Endothelial cell of umbilical vein (primary cell): ENCODE measurements at regions of chr13 and their contacts with region 1.

Region 1: DNA sequence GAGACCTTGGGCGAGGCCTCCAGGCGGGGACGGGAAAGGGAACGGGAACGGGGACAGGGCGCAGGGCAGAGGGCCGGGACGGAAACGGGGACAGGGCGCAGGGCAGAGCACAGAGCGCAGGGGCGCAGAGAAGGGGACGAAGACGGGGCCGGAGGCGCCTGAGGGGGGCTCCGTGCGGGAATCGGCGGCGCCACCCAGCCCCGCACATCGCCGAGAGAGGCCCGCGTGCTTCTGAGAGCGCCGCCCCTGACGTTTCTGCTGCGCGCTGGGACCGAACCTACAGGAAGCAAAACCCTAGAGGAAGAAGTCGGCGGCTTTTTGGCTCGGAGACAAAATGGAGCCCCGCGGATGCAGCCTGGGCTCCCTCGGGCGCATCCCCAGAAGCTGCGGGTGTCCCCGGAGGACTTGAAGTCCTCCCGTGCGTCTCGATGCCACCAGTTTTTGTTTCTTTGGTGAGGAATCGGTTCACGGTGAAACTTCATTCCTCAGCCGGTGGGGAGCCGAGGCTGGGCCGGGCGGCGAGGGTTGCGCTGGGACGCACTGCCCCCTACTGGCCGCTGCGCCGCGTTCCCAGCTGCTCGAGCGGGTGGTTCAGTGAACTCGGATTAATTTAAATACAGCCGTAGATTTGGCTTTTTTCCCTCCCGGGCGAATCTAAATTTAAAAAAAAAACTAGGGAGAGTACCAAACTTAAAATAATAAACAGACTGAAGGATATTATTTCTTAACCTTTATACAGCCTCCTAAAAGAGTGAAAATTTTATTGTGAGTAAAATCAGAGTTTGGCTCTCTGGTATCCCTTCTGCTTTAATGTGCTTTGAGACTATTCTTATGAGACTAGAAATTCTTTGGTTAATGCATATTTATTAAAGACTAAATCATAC is 350.0 kb upstream of the ARGLU1 start:
- DNase-seq: peak; percentile 91
- H3K4me3 ChIP-seq: peak overlapping the region; percentile 44 to 74 (median 51)
- H3K27ac ChIP-seq: peak overlapping the region; percentile 90
- H3K4me1 ChIP-seq: peaks cover 27% of the 10 kb centered on the region
- H3K27me3 ChIP-seq: peaks cover 7 to 13% of the 10 kb centered on the region in 2 experiments
- CTCF ChIP-seq: peak; percentile 92 to 97
- POLR2A ChIP-seq: peak; percentile 55

Region 2: GRCh38 chr13:105442941-105443340 is 1475.0 kb before region 1 on chr13:
- CTCF ChIA-PET with region 1: no interaction called
- POLR2A ChIA-PET with region 1: no interaction called
- dilution Hi-C with region 1: no loop called
- intact Hi-C with region 1: loop called (anchors 1 kb)
- DNase-seq: peak; percentile 93
- H3K4me3 ChIP-seq: no peak overlapping the region
- H3K27ac ChIP-seq: peak overlapping the region; percentile 65
- H3K4me1 ChIP-seq: peaks cover 24% of the 10 kb centered on the region
- H3K27me3 ChIP-seq: no peaks in the 10 kb centered on the region
- CTCF ChIP-seq: no peak
- POLR2A ChIP-seq: no peak

Region 3: DNA sequence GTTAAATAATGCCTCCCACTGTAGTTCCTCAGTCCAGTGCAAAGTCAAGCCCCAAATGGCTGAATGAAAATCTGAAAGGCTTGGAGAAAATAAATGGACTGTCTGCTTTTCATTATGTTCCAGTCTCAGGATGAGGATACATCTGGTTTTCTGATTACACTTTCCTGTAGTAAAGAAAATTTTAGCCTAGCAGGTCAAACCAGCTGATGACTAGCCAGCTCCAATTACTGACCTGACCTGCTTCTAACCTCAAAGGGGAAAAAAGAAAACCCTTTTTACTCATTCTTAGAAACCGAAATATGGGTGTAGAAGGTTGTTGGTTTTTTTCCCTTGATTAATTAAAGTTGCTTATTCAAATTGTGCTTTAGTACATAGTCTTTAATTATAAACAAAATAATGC is 800.9 kb before region 1 on chr13:
- CTCF ChIA-PET with region 1: no interaction called
- POLR2A ChIA-PET with region 1: no interaction called
- dilution Hi-C with region 1: no loop called
- intact Hi-C with region 1: loop called (anchors 5 kb)
- DNase-seq: peak; percentile 93
- H3K4me3 ChIP-seq: no peak overlapping the region
- H3K27ac ChIP-seq: peak overlapping the region; percentile 74
- H3K4me1 ChIP-seq: peaks cover 52% of the 10 kb centered on the region
- H3K27me3 ChIP-seq: no peaks in the 10 kb centered on the region
- CTCF ChIP-seq: no peak
- POLR2A ChIP-seq: no peak

Region 4: DNA sequence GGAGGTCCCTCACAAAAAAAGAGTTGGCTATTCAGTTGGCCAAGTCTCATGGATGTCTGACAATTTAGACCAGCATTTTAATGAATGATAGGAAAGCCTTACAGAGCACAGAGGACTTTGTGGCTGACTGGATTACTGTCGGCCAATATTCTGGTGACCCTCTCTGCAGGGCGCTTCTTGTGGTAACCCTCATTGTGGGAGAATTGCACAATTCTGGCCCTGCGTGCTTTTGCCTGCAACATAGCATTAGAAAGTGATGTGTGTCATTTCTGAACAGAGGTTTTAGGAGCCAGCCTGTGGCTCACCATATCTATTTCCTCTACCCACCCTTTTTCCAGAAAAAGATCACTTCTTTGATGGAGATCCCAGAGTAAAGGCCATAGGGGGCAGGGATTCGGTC is 453.8 kb before region 1 on chr13:
- CTCF ChIA-PET with region 1: no interaction called
- POLR2A ChIA-PET with region 1: no interaction called
- dilution Hi-C with region 1: no loop called
- intact Hi-C with region 1: no loop called
- DNase-seq: no peak
- H3K4me3 ChIP-seq: no peak overlapping the region
- H3K27ac ChIP-seq: no peak overlapping the region
- H3K4me1 ChIP-seq: no peaks in the 10 kb centered on the region
- H3K27me3 ChIP-seq: peaks cover 2 to 9% of the 10 kb centered on the region in 2 experiments
- CTCF ChIP-seq: no peak
- POLR2A ChIP-seq: no peak

Region 5: GRCh38 chr13:106493533-106494220 is 424.2 kb before region 1 on chr13:
- CTCF ChIA-PET with region 1: no interaction called
- POLR2A ChIA-PET with region 1: interaction called, 3 read pairs
- dilution Hi-C with region 1: no loop called
- intact Hi-C with region 1: loop called (anchors 2 kb)
- DNase-seq: no peak
- H3K4me3 ChIP-seq: no peak overlapping the region
- H3K27ac ChIP-seq: no peak overlapping the region
- H3K4me1 ChIP-seq: peaks cover 35% of the 10 kb centered on the region
- H3K27me3 ChIP-seq: no peaks in the 10 kb centered on the region
- CTCF ChIP-seq: no peak
- POLR2A ChIP-seq: no peak

Region 6: GRCh38 chr13:106680796-106681472 is 237.0 kb before region 1 on chr13:
- CTCF ChIA-PET with region 1: no interaction called
- POLR2A ChIA-PET with region 1: no interaction called
- dilution Hi-C with region 1: no loop called
- intact Hi-C with region 1: loop called (anchors 1 kb)
- DNase-seq: peak; percentile 81
- H3K4me3 ChIP-seq: no peak overlapping the region
- H3K27ac ChIP-seq: peak overlapping the region; percentile 22
- H3K4me1 ChIP-seq: peaks cover 25% of the 10 kb centered on the region
- H3K27me3 ChIP-seq: no peaks in the 10 kb centered on the region
- CTCF ChIP-seq: no peak
- POLR2A ChIP-seq: no peak

Region 7: GRCh38 chr13:107205303-107206104 is 287.6 kb after region 1 on chr13:
- CTCF ChIA-PET with region 1: interaction called, 9 read pairs
- POLR2A ChIA-PET with region 1: interaction called, 3 read pairs
- dilution Hi-C with region 1: no loop called
- intact Hi-C with region 1: loop called (anchors 1 kb)
- DNase-seq: peak; percentile 71
- H3K4me3 ChIP-seq: no peak overlapping the region
- H3K27ac ChIP-seq: no peak overlapping the region
- H3K4me1 ChIP-seq: peaks cover 24% of the 10 kb centered on the region
- H3K27me3 ChIP-seq: no peaks in the 10 kb centered on the region
- CTCF ChIP-seq: peak; percentile 90 to 97
- POLR2A ChIP-seq: no peak

Region 8: DNA sequence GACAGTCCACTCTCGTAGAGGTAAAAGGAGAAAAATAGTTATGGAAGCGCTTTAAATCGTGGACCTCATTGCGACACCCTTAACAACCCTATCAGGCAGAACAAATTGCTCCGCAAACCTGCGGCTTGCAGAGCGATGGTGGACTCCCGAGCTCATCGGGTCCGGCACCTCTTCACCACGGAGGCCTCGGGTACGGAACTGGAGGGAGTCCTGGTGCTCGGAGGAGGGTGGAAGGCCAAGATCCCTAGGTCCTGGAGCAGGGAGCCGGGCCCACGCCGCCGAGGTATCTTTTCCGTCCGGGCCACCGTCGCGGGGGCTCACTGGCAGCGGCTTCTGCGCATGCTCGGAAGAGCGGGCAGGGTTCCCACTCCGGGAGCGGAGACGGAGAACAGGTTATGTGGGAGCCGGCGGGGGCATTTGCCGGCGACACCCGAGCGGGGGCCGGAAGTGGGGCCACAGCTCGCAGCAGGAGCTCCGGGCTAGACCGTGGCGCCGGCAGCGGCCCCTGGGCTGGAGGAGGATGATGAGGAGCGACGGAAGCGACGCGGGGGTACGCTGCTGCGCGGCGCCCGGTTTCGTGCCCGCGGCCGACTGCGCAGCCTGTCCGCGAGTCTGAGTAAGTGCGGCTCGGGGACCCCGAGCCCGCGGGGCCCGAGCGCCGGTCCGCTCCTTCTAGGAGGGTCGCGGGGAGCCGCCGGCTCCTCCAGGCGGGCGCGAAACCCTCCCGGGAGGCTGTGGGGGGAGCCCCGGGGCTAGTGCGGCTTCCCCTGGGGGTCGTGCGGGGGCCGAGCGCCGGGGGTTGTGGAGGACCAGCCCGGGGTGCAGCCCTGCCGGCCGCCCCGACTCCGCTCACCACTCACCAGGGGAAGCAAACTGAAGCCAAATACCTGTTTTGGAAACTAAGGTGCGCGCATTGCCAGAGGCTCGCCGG is 1300.4 kb after region 1 on chr13 and contains the start of gene ABHD13:
- CTCF ChIA-PET with region 1: no interaction called
- POLR2A ChIA-PET with region 1: no interaction called
- dilution Hi-C with region 1: no loop called
- intact Hi-C with region 1: loop called (anchors 2 kb)
- DNase-seq: peak; percentile 90
- H3K4me3 ChIP-seq: peak within 1 kb of the TSS; percentile 74 to 81 (median 74)
- H3K27ac ChIP-seq: peak within 1 kb of the TSS; percentile 85
- H3K4me1 ChIP-seq: peaks cover 18% of the 10 kb centered on the region
- H3K27me3 ChIP-seq: no peaks in the 10 kb centered on the region
- CTCF ChIP-seq: no peak
- POLR2A ChIP-seq: peak; percentile 73
- total RNA-seq, gene ABHD13: 6.2 and 7.2 TPM in 2 replicates